Left ventricle myocardium inferior (tissue), 1 donor: ENCODE measurements at regions of chr1 and their contacts with region 1.

Region 1: DNA sequence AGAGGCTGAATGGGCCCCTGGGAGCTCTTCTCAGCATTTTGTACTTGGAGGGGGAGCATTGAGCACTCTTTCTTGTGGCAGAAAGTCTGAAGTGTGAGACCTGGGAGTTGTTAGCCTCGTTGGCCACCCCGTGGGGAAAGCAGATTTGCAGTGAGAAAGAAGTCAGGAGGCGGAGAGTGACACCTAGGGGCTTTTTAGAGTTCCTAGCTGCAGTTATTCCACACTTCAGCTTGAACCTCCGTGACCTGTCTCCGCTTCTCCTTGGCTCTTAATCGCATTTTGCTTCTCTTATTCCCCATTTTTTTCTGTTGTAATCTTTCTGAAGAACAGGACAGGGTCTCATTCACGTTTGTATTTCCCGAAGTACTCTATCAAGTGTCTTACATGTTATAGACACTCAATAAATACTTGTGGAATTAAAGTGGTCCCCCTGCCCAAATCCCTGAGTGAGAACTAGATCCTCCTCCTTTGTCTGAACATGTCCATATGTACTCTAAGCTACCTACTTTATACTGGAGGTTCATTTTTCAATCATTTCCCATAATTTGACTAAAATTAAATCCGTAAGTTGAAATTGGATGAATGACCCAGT is 14.5 kb upstream of the C1orf141 start:
- DNase-seq: peak; percentile 28
- H3K4me3 ChIP-seq: no peak overlapping the region
- H3K27ac ChIP-seq: no peak overlapping the region
- H3K4me1 ChIP-seq: peaks cover 10% of the 10 kb centered on the region
- H3K27me3 ChIP-seq: peaks cover 4% of the 10 kb centered on the region
- CTCF ChIP-seq: peak; percentile 86

Region 2: GRCh38 chr1:66580081-66580480 is 569.2 kb before region 1 on chr1:
- intact Hi-C with region 1: no loop called
- DNase-seq: no peak
- H3K4me3 ChIP-seq: no peak overlapping the region
- H3K27ac ChIP-seq: no peak overlapping the region
- H3K4me1 ChIP-seq: peaks cover 16% of the 10 kb centered on the region
- H3K27me3 ChIP-seq: no peaks in the 10 kb centered on the region
- CTCF ChIP-seq: no peak

Region 3: GRCh38 chr1:66764994-66765578 is 384.2 kb before region 1 on chr1:
- intact Hi-C with region 1: loop called (anchors 10 kb)
- DNase-seq: no peak
- H3K4me3 ChIP-seq: no peak overlapping the region
- H3K27ac ChIP-seq: no peak overlapping the region
- H3K4me1 ChIP-seq: no peaks in the 10 kb centered on the region
- H3K27me3 ChIP-seq: no peaks in the 10 kb centered on the region
- CTCF ChIP-seq: peak; percentile 83

Region 4: GRCh38 chr1:66993071-66993470 is 156.2 kb before region 1 on chr1:
- intact Hi-C with region 1: loop called (anchors 5 kb)
- DNase-seq: no peak
- H3K4me3 ChIP-seq: no peak overlapping the region
- H3K27ac ChIP-seq: no peak overlapping the region
- H3K4me1 ChIP-seq: peaks cover 5% of the 10 kb centered on the region
- H3K27me3 ChIP-seq: no peaks in the 10 kb centered on the region
- CTCF ChIP-seq: no peak

Region 5: DNA sequence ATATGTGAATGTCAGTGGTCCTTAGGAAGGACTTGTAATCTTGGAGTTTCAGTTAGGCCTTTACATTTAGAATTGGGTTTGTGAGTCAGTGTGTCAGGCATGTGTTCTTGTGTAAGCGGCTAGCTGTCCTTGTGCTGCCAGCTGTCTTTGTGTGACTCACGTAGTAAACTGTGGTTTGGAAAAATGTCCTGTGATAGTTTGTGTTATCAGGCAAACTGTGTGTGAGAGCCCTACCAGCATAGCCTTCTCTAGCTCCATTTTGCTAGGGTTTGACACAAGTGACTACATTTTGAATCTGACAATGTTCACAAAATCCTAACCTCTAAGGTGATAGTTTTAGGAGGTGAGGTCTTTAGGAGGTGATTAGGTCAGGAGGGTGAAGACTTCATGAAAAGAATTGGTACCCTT is 88.5 kb before region 1 on chr1:
- intact Hi-C with region 1: no loop called
- DNase-seq: no peak
- H3K4me3 ChIP-seq: no peak overlapping the region
- H3K27ac ChIP-seq: no peak overlapping the region
- H3K4me1 ChIP-seq: no peaks in the 10 kb centered on the region
- H3K27me3 ChIP-seq: peaks cover 5% of the 10 kb centered on the region
- CTCF ChIP-seq: no peak

Region 6: DNA sequence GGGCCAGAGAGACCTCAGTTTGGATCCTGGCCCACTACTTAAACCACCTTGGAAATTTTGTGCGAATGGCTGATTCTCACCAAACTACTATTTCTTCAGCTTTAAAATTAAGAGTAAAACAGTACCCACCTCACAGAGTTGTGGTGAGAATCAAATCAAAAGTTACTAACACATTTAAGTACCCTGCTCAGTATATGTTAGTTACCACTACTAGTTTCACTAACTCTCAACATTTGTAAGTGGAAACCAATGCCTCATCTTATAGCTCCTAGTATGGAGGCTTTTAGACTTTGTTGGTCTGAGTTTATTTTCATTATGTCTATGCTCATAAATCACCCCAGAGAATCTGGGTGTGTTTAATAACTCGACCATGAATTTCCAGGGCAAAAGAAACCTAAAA is 292.5 kb after region 1 on chr1:
- intact Hi-C with region 1: no loop called
- DNase-seq: no peak
- H3K4me3 ChIP-seq: no peak overlapping the region
- H3K27ac ChIP-seq: no peak overlapping the region
- H3K4me1 ChIP-seq: peaks cover 18% of the 10 kb centered on the region
- H3K27me3 ChIP-seq: no peaks in the 10 kb centered on the region
- CTCF ChIP-seq: no peak